OCI-LY7 (cell line): ENCODE measurements at regions of chr12 and their contacts with region 1.

Region 1: GRCh38 chr12:46886541-46887041 is 60.8 kb upstream of the SLC38A4 start:
- DNase-seq: no peak
- H3K4me3 ChIP-seq: no peak overlapping the region
- H3K27ac ChIP-seq: no peak overlapping the region
- H3K4me1 ChIP-seq: no peaks in the 10 kb centered on the region
- CTCF ChIP-seq: no peak

Region 2: GRCh38 chr12:46523863-46524770 is 362.5 kb before region 1 on chr12:
- CTCF ChIA-PET with region 1: no interaction called
- POLR2A ChIA-PET with region 1: no interaction called
- intact Hi-C with region 1: loop called (anchors 10 kb)
- DNase-seq: no peak
- H3K4me3 ChIP-seq: no peak overlapping the region
- H3K27ac ChIP-seq: no peak overlapping the region
- H3K4me1 ChIP-seq: no peaks in the 10 kb centered on the region
- CTCF ChIP-seq: no peak

Region 3: DNA sequence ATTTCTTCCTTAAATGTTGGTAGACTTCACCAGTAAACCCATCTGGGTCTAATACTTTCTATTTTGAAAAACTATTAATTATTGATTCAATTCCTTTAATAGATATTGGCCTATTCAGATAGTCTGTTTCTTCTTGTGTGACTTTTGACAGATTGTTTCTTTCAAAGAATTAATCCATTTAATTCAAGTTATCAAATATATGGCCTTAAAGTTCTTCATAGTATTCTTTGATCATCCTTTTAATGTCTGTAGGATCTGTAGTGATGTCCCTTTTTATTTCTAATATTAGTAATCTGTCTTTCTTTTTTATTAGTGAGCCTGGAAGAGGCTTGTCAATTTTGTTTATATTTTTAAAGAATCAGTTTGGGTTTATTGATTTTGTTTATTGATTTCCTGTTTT is 250.8 kb before region 1 on chr12:
- CTCF ChIA-PET with region 1: no interaction called
- POLR2A ChIA-PET with region 1: no interaction called
- intact Hi-C with region 1: no loop called
- DNase-seq: no peak
- H3K4me3 ChIP-seq: no peak overlapping the region
- H3K27ac ChIP-seq: no peak overlapping the region
- H3K4me1 ChIP-seq: no peaks in the 10 kb centered on the region
- CTCF ChIP-seq: no peak

Region 4: GRCh38 chr12:46908236-46908935 is 21.8 kb after region 1 on chr12:
- CTCF ChIA-PET with region 1: no interaction called
- POLR2A ChIA-PET with region 1: no interaction called
- intact Hi-C with region 1: no loop called
- DNase-seq: no peak
- H3K4me3 ChIP-seq: no peak overlapping the region
- H3K27ac ChIP-seq: no peak overlapping the region
- H3K4me1 ChIP-seq: no peaks in the 10 kb centered on the region
- CTCF ChIP-seq: no peak